MCF 10A (cell line): ENCODE measurements at regions of chr5 and their contacts with region 1.

Region 1: DNA sequence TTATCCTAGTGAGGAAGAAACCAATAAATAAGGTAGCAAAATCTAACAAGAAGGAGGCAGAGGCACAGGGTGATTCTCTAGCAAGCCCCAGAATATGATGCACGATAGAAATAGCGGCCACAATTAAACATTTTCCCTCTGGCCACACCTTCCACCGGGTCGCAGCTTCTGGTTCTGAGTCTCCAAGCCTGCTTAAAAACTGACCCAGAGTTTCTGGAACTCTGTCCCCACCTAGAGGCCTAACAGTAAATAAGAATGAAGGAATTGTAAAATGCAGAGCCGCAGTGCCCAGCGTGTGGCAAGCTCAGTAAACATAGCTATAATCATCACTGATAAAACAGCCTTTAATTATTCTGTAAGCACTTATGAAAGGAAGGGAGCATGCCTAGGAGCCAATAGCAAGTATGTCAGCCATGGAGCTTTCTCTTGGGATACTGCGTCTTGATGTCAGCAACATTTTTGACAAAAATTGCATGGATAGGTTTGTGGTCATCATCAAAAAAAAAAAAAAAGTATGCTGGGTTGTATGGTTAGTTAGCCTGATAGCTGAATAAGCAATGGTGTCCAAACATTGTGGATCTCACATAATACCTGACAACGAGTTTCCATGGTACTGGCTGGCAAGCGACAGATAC is 465.5 kb downstream of the DNAH5 start:
- DNase-seq: peak; percentile 80
- H3K4me3 Mint-ChIP-seq: no peak overlapping the region
- H3K27ac Mint-ChIP-seq: no peak overlapping the region
- H3K4me1 Mint-ChIP-seq: peaks cover 11% of the 10 kb centered on the region
- H3K27me3 Mint-ChIP-seq: no peaks in the 10 kb centered on the region
- CTCF ChIP-seq: peak; percentile 77

Region 2: DNA sequence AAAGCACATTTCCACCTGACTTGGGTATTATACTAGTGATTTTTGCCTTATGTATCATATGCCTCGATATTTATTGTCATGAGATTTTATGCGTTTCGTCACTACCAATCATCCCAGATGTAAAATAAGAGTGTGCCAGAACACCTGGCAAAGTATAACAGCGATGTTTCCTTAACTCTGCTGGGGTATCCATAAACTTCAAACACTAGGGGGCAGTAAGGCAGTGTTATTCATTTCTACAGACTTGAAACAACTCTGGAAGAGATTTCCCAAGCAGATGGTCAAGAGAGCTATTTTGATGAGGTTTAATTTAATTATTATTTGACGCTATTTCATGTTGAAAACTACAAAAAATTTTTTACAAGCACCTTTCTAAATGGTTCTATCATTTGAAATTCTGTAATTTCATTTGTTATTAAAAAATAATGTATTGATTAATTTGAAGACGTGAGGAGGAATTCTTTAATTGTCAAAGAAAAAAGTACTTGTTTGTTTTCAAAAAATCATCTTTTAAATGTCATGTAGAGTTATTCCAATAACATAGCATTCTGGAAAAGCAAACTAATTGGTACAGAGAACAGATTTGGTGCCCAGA is 1186.2 kb before region 1 on chr5:
- CTCF ChIA-PET with region 1: interaction called, 20 read pairs
- POLR2A ChIA-PET with region 1: no interaction called
- intact Hi-C with region 1: no loop called
- DNase-seq: peak; percentile 50
- H3K4me3 Mint-ChIP-seq: no peak overlapping the region
- H3K27ac Mint-ChIP-seq: no peak overlapping the region
- H3K4me1 Mint-ChIP-seq: no peaks in the 10 kb centered on the region
- H3K27me3 Mint-ChIP-seq: no peaks in the 10 kb centered on the region
- CTCF ChIP-seq: no peak

Region 3: GRCh38 chr5:12704955-12705354 is 774.0 kb before region 1 on chr5:
- CTCF ChIA-PET with region 1: interaction called, 7 read pairs
- POLR2A ChIA-PET with region 1: no interaction called
- intact Hi-C with region 1: loop called (anchors 5 kb)
- DNase-seq: peak; percentile 10
- H3K4me3 Mint-ChIP-seq: no peak overlapping the region
- H3K27ac Mint-ChIP-seq: no peak overlapping the region
- H3K4me1 Mint-ChIP-seq: no peaks in the 10 kb centered on the region
- H3K27me3 Mint-ChIP-seq: no peaks in the 10 kb centered on the region
- CTCF ChIP-seq: no peak

Region 4: DNA sequence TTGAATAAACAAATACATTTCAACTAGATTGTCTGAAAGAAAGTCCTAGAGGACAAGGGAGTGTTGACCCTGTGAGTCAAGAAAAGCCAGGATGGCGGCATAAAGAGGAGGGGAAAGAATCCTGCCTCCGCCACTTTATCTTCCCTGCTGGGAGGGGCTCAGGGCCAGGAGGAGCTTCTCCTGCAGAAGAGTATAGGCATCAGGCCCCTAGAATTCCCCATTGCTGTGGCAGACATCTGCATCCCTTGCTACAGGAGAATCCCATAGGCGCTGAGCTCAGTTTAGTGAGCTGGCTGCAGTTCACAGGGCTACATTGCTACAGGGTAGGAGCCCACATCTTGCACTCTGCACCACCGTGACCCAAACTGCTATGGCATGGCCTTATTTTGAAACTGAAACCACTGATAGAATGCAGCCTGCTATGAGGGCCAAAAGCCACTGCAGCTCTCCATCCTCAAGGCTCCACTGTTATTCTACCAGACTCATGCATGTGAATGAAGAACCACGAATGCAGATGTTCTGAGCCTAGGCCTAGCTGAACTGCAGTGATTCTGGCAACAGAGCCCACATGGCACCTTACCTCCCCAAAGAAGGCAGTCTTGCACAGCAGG is 633.3 kb before region 1 on chr5:
- CTCF ChIA-PET with region 1: no interaction called
- POLR2A ChIA-PET with region 1: no interaction called
- intact Hi-C with region 1: no loop called
- DNase-seq: no peak
- H3K4me3 Mint-ChIP-seq: no peak overlapping the region
- H3K27ac Mint-ChIP-seq: no peak overlapping the region
- H3K4me1 Mint-ChIP-seq: peaks cover 5% of the 10 kb centered on the region
- H3K27me3 Mint-ChIP-seq: no peaks in the 10 kb centered on the region
- CTCF ChIP-seq: no peak

Region 5: DNA sequence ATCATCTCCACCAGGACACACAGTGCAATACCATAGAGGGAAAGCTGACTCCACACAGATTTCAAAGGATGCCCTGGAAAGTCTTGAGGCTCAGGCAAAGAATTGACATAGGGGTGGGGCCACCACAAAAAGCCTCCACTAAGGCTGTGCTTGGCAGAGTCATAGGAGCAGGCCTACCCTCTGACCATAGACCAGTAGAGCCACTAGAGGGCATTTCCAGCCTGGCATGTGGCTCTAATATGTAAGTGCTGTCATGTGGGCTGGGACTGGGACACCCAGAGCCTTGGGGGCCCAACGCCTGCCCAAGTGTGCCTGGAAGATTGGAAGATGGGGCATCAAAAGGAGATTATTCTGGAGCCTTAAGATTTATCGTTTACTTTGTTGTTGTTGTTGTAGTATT is 260.4 kb before region 1 on chr5:
- CTCF ChIA-PET with region 1: interaction called, 8 read pairs
- POLR2A ChIA-PET with region 1: no interaction called
- intact Hi-C with region 1: loop called (anchors 1 kb)
- DNase-seq: peak; percentile 38
- H3K4me3 Mint-ChIP-seq: no peak overlapping the region
- H3K27ac Mint-ChIP-seq: no peak overlapping the region
- H3K4me1 Mint-ChIP-seq: no peaks in the 10 kb centered on the region
- H3K27me3 Mint-ChIP-seq: no peaks in the 10 kb centered on the region
- CTCF ChIP-seq: peak; percentile 31

Region 6: GRCh38 chr5:13814302-13814701 is 335.4 kb after region 1 on chr5:
- CTCF ChIA-PET with region 1: interaction called, 3 read pairs
- POLR2A ChIA-PET with region 1: no interaction called
- intact Hi-C with region 1: loop called (anchors 10 kb)
- DNase-seq: peak; percentile 33
- H3K4me3 Mint-ChIP-seq: no peak overlapping the region
- H3K27ac Mint-ChIP-seq: no peak overlapping the region
- H3K4me1 Mint-ChIP-seq: peaks cover 9% of the 10 kb centered on the region
- H3K27me3 Mint-ChIP-seq: no peaks in the 10 kb centered on the region
- CTCF ChIP-seq: peak; percentile 27

Region 7: GRCh38 chr5:14767735-14768507 is 1289.0 kb after region 1 on chr5:
- CTCF ChIA-PET with region 1: no interaction called
- POLR2A ChIA-PET with region 1: no interaction called
- intact Hi-C with region 1: no loop called
- DNase-seq: no peak
- H3K4me3 Mint-ChIP-seq: no peak overlapping the region
- H3K27ac Mint-ChIP-seq: no peak overlapping the region
- H3K4me1 Mint-ChIP-seq: no peaks in the 10 kb centered on the region
- H3K27me3 Mint-ChIP-seq: no peaks in the 10 kb centered on the region
- CTCF ChIP-seq: no peak